Posterior cingulate gyrus (tissue), 11 donors: ENCODE measurements at regions of chr20 and their contacts with region 1.

Region 1: DNA sequence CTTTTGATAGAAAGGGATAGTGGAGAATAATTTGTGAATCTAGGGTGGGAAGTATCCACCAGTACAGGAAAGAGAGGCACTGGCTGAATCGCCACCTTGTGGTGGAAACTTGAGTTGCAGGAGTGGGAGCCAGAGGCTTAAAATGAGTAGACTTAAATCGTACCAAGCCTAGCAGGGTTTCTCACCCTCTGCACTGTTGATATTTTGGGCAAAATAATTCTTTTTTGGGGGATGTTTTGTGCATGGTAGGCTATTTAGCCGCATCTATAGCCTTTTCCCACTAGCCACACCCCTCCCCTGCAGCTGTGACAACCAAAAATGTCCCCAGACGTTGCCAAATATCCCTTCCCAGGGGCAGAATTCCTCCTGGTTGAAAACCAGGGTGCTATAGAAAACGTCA is 119.1 kb downstream of the DHX35 start:
- DNase-seq: peak; percentile 79 to 97 (median 92)

Region 2: GRCh38 chr20:39049684-39050554 is 31.3 kb before region 1 on chr20:
- intact Hi-C with region 1: loop called (anchors 1 kb)
- DNase-seq: peak; percentile 63 to 97 (median 80)

Region 3: DNA sequence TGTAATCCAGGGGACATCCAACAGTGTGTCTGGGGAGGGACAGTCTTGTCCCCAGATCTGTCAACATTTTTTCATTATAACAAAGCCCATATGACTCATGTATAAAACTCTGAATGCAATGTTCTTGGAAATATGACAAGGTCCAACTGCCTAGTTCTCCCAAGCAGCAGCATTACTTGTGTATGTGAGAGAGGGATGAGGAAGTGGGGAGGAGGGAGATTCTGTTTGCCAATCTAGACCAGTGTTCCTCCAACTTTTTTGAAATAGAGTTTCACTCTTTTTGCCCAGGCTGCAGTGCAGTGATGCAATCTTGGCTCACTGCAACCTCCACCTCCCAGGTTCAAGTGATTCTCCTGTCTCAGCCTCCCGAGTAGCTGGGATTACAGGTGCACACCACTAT is 275.7 kb after region 1 on chr20:
- intact Hi-C with region 1: no loop called
- DNase-seq: no peak